Common myeloid progenitor, CD34-positive (primary cell): ENCODE measurements at regions of chr10 and their contacts with region 1.

Region 1: GRCh38 chr10:84531396-84531795 is 203.0 kb downstream of the CCSER2 start:
- DNase-seq: no peak
- H3K4me3 ChIP-seq: no peak overlapping the region
- H3K27ac ChIP-seq: no peak overlapping the region
- H3K4me1 ChIP-seq: no peaks in the 10 kb centered on the region
- H3K27me3 ChIP-seq: no peaks in the 10 kb centered on the region

Region 2: GRCh38 chr10:84264611-84265141 is 266.7 kb before region 1 on chr10:
- CTCF ChIA-PET with region 1: interaction called, 139 read pairs
- POLR2A ChIA-PET with region 1: no interaction called
- DNase-seq: peak; percentile 58 to 74 (median 68)
- H3K4me3 ChIP-seq: no peak overlapping the region
- H3K27ac ChIP-seq: no peak overlapping the region
- H3K4me1 ChIP-seq: peaks cover 0 to 9% (median 2%) of the 10 kb centered on the region in 4 experiments
- H3K27me3 ChIP-seq: peaks cover 0 to 8% (median 0%) of the 10 kb centered on the region in 5 experiments

Region 3: DNA sequence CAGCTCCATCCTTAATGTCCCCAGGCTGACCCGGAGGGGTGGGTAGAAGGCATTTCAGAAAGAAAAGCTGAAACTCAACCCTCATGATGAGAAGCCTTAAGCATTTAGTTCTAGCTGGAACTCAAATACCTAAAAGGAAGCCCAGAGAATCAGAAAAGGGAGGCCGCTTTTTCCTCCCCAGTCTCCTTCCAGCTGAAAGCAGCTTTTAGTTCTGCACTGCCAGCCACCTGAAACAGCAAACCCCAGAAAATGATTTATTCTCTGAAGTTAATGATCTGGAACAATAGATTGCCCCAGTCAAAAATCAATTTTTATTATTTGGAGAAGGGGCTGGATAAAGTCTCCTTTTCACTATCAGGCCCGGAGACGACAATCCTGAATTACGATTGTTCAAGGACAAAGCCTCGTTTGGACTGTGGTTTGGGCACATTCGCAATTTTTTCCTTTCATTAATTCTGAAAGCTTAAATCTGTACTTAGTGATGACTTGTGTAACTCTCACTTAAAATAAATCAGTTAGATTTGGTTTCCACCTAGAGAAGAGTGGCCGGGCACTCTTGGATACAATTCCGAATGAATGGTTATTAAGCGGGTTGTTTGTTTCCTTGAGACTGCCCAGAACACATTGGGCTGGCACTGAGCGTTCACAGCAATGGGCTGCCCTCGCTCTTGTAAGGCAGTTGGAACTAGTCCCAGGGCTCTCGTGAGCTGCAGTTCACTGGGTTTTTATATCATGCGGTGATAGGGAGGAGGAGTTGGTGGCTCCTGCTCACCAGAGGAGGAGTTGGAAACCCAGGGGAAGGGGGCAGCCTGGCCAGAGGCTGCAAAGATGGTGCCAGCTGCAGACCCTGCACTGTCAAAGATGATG is 59.2 kb after region 1 on chr10:
- CTCF ChIA-PET with region 1: no interaction called
- POLR2A ChIA-PET with region 1: no interaction called
- DNase-seq: no peak
- H3K4me3 ChIP-seq: no peak overlapping the region
- H3K27ac ChIP-seq: no peak overlapping the region
- H3K4me1 ChIP-seq: no peaks in the 10 kb centered on the region
- H3K27me3 ChIP-seq: peaks cover 0 to 18% (median 1%) of the 10 kb centered on the region in 5 experiments